Dendritic cell treated with granulocyte-macrophage colony-stimulating factor and Interleukin-4, amounts not matched to agents 40 ng/mL and 50 ng/mL, for 4 days (primary cell): ENCODE measurements at regions of chr11 and their contacts with region 1.

Region 1: DNA sequence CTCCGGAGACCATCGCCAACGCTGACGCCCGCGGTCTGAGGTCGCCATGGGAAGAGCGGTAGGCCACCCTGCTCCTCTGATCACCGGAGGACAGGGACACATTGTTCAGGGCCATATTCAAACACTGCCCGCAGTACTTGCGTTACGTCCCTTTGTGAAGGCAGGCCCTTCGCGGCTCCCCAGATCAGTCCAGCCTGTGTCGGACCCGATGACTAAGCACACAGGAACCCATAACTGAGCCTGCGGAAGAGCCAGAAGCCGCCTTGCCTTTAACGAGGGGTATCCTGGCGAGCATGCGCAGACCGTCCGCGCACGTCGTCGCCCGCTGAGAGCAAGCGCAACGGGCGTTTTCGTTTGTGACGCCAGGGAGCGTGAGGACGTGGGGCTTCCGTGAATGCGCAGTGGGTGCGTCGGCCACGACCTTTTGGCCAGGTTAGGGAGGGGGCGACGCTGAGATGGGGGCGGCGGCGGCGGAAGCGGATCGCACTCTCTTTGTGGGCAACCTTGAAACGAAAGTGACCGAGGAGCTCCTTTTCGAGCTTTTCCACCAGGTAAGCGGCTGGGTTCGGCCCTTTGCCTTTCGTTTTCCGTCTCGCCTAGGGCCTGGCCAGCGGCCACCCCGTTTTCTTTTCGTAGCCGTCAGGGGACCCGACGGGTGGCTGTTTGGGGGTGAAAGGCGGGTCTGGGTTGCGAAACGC is at the starts of genes C11orf71 and RBM7:
- H3K4me3 Mint-ChIP-seq: peak within 1 kb of the TSS; percentile 93
- H3K27ac Mint-ChIP-seq: peak within 1 kb of the TSS; percentile 99
- H3K4me1 Mint-ChIP-seq: peaks cover 36% of the 10 kb centered on the region
- H3K27me3 Mint-ChIP-seq: no peaks in the 10 kb centered on the region

Region 2: DNA sequence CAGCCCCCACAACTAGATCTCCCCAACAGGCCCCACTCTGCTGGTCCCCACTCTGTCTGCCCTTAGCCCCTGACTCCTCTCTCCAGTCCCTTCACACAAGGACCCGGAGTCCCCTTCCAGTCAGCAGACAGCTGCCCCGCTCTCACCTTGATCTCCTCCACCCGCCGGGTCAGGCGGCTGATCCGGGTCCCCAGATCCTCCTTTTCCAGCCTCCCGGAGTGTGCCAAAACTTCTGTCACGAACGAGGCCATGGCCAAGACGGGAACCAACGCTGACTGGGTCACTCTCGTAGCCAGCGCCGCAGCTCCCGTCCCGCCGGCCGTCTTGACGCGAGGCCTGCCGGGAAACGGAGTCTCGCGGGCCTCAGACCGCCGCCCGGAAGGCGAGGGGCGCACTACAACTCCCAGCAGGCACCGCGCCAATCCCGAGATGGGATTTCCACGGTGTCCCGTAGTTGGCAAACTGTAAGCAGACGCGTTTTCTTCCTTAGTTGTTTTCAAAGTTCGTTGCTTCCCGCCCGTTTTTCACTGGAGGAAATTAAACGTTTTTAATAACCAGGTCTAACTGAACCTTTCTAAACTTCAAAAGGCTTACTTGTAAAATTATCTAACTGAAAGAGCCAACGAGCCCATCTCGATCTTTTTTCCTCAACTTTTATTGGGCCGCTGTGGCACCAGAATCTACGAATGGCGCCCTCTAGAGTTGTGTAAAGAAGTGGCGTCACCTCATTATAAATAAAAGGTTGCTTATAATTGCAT is 626.8 kb before region 1 on chr11 and contains the start of gene ZW10:
- intact Hi-C with region 1: loop called (anchors 2 kb)
- H3K4me3 Mint-ChIP-seq: peak within 1 kb of the TSS; percentile 98
- H3K27ac Mint-ChIP-seq: peak within 1 kb of the TSS; percentile 97
- H3K4me1 Mint-ChIP-seq: peaks cover 13% of the 10 kb centered on the region
- H3K27me3 Mint-ChIP-seq: peaks cover 14% of the 10 kb centered on the region

Region 3: GRCh38 chr11:113875234-113876073 is 524.9 kb before region 1 on chr11 and contains the start of gene USP28:
- intact Hi-C with region 1: loop called (anchors 2 kb)
- H3K4me3 Mint-ChIP-seq: peak within 1 kb of the TSS; percentile 92
- H3K27ac Mint-ChIP-seq: peak within 1 kb of the TSS; percentile 99
- H3K4me1 Mint-ChIP-seq: peaks cover 33% of the 10 kb centered on the region
- H3K27me3 Mint-ChIP-seq: no peaks in the 10 kb centered on the region

Region 4: DNA sequence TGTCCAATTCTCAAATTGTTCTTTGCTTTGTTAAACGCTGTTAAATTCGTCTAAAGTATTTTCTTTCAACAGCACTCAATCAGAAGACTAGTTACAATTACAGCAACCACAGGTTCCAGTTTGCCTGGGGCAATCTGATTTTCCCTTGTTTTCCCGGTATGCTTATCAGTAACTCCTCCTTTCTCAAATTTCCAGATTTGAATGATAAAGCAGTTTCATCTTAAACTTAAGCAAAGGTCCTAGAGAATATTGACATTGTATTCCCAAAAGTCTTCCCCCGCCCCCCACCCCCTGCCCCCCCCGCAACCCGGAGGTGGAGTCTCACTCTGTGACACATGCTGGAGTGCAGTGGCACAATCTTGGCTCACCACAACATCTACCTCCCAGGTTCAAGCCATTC is 514.5 kb before region 1 on chr11:
- intact Hi-C with region 1: no loop called
- H3K4me3 Mint-ChIP-seq: no peak overlapping the region
- H3K27ac Mint-ChIP-seq: no peak overlapping the region
- H3K4me1 Mint-ChIP-seq: no peaks in the 10 kb centered on the region
- H3K27me3 Mint-ChIP-seq: no peaks in the 10 kb centered on the region

Region 5: GRCh38 chr11:114348200-114349191 is 51.9 kb before region 1 on chr11:
- intact Hi-C with region 1: loop called (anchors 5 kb)
- H3K4me3 Mint-ChIP-seq: no peak overlapping the region
- H3K27ac Mint-ChIP-seq: no peak overlapping the region
- H3K4me1 Mint-ChIP-seq: peaks cover 7% of the 10 kb centered on the region
- H3K27me3 Mint-ChIP-seq: no peaks in the 10 kb centered on the region

Region 6: DNA sequence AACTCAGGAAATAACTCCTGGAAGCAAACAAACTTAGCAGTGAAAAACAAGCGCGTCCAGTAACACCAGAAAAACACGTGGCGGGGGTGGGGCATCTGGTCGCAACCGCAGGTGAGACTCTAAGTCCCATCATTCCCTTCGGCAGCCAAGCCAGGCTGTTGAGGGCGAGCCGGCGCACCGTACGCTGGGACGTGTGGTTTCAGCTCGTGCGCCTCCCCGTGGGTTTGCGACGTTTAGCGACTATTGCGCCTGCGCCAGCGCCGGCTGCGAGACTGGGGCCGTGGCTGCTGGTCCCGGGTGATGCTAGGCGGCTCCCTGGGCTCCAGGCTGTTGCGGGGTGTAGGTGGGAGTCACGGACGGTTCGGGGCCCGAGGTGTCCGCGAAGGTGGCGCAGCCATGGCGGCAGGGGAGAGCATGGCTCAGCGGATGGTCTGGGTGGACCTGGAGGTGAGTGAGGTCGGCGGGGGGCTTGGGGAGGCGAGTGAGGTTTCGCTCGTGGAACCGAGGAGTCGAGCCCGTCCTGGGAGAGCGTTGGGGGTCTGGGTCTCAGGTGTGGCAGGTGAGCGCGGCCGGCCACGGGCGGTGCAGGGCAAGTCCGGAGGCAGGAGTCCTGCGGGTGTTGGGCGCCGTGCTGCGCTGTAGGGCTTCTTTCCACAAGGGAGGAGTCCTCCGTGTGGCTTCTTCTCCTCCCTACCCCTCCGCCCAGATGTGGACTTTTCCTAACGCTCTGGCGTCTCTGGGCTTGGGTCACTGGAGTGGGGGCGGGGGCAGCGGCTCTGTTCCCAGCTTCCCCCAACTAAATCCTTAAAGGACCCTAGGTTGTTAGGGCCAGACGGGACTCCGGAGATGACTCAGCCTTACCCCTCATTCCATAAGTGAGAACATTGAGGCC is 39.1 kb after region 1 on chr11 and contains the start of gene REXO2:
- intact Hi-C with region 1: loop called (anchors 1 kb)
- H3K4me3 Mint-ChIP-seq: peak within 1 kb of the TSS; percentile 97
- H3K27ac Mint-ChIP-seq: peak within 1 kb of the TSS; percentile 79
- H3K4me1 Mint-ChIP-seq: peaks cover 15% of the 10 kb centered on the region
- H3K27me3 Mint-ChIP-seq: no peaks in the 10 kb centered on the region